ENCODE measurements at regions of chr2 and their contacts with region 1.

Region 1: DNA sequence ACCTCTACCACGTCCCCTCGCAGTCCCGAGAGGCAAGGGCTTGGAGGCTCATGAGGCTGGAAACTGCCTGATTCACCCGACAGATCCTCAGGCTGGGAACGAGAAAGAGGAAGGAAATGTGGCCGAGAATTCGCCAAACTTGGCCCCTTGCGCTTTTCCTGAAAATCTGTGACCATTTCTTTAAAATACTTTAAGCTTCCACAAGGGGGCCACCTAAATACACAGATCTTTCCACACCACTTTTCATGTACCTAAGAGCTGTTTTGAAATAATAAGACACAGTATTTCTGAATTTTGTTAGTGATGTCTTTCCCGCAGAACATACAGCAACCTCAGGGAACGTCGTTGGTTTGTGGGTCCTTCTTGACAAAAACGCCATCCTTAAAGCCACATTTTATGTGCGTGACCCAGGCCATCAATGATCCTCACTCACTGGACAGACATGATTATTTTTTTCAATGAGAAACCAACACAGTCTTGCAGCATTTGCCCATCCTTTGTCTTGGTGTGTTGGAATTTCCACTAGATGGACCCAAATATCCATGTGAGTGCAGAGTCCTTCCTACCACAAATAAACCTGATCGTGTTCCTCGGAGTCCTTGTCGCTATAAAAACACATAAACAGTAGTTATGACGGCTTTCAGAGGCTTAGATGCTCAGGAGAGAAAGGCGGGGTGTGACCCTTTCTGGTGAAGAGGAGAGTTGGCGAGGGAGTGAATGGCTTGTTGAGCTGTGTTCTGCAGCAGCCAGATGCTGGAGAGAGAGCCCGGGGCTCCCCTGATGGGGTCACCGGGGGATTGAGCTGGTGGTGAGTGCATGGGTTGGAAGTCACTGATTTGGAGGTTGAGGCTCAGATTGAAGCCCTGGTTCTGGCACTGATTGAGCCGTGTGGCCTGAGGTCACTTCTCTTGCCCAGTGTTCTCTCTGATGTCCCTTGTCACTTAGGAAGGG is 25.0 kb downstream of the DCDC2C start:
- DNase-seq: no peak
- H3K4me3 Mint-ChIP-seq: no peak overlapping the region
- H3K27ac Mint-ChIP-seq: no peak overlapping the region
- H3K4me1 Mint-ChIP-seq: no peaks in the 10 kb centered on the region
- H3K27me3 Mint-ChIP-seq: peaks cover 2% of the 10 kb centered on the region

Region 2: GRCh38 chr2:3780477-3781402 is 52.4 kb after region 1 on chr2:
- CTCF ChIA-PET with region 1: interaction called, 71 read pairs
- POLR2A ChIA-PET with region 1: interaction called, 3 read pairs
- DNase-seq: peak; percentile 79
- H3K4me3 Mint-ChIP-seq: peak overlapping the region; percentile 7
- H3K27ac Mint-ChIP-seq: no peak overlapping the region
- H3K4me1 Mint-ChIP-seq: peaks cover 13% of the 10 kb centered on the region
- H3K27me3 Mint-ChIP-seq: peaks cover 12% of the 10 kb centered on the region

Region 3: DNA sequence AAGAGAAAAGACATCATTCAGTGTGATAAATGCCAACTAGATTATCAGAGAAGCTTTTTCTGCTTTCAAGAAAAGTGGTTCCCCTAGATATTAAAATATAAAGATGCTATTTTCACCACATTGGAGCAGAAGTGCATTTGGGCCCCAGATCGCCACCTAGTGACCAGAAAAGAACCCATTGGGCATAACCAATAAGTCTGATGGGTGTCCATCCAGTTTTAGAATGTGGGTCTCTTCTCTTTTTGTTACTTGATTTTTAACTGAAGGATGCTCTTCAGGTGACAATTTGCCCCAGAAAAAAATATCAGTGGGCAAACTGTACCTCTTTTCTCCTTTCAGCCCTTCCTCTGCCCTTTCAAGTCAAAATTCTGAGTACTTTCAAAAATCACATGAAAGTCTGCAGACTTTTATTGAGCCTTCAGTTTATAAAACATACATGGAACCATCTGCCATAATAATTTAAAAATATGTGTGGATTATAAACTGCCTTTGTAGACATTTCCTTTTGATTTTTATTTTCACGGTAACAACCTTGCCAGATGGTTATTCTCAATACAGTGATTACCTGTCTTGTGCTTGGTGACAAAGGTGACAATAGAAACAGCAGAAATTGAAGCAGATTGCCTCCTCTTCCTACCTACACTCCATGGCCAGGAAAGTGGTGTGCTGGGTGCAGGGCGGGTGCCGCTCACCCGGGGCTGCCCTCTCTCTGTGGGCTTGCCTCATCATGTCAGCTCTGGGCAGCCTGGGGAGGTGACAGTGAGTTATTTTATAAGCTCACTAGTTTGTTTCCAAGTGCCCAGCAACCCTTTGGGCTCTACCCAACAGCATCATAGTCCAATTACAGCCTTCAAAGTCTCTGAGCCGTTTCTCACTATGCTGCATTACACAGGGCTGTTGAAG is 99.5 kb after region 1 on chr2:
- CTCF ChIA-PET with region 1: interaction called, 16 read pairs
- POLR2A ChIA-PET with region 1: no interaction called
- DNase-seq: no peak
- H3K4me3 Mint-ChIP-seq: no peak overlapping the region
- H3K27ac Mint-ChIP-seq: no peak overlapping the region
- H3K4me1 Mint-ChIP-seq: no peaks in the 10 kb centered on the region
- H3K27me3 Mint-ChIP-seq: no peaks in the 10 kb centered on the region

Measured in activated CD4-positive, alpha-beta memory T cell treated with anti-CD3 and anti-CD28 coated beads, Interleukin-2, amount 10 ng/mL, durations not matched to agents 7 days and 5 days (primary cell).